Left colon (tissue), 2 donors: ENCODE measurements at regions of chr6 and their contacts with region 1.

Region 1: GRCh38 chr6:7282097-7282906 is 30.7 kb downstream of the SSR1 start:
- DNase-seq: no peak
- ATAC-seq: no peak

Region 2: DNA sequence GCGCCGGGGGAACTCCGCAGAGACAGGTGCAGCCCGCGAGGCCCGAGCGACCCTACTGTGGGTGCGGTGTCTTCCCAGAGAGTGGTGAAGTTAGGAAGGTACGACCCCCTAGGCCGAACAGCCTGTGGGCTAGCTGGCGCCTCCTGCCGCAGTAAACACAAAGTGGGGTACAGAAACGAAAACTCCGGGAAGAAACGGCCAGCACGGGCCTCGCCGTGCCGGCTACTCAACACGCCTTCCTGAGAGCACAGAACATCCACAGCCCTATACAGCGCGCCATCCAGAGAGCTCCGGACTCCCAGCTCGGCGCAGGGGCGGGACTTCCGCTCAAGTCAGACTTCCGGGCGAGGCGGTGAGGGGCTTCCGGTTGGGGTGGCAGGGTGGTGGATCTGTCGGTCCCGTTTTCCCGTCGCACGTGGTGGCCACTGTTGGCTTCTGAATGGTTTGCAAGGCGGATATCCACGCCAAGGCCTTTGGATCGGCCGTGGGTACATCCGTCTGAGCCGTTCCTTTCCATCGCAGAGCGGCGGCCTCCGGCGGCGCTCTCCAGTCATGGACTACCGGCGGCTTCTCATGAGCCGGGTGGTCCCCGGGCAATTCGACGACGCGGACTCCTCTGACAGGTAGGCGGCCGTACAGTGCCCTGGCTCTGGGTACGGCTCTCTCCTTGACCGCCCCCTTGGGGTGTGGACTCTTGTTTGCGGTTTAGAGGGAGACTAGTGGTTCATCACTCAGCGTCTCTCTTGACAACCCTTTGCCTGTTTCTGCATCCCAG is 107.3 kb after region 1 on chr6 and contains the starts of genes CAGE1 and RIOK1:
- intact Hi-C with region 1: loop called in 1 of 2 experiments (anchors 10 kb)
- DNase-seq: peak; percentile 96 to 97
- ATAC-seq: peak; percentile 97
- total RNA-seq, gene CAGE1: 0.08 TPM in 1 of 2 donors, not detected in the other
- total RNA-seq, gene RIOK1: 11.8 to 15.6 TPM